MCF 10A (cell line): ENCODE measurements at regions of chr2 and their contacts with region 1.

Region 1: GRCh38 chr2:148020111-148021058 is at the start of gene ORC4:
- DNase-seq: peak; percentile 100
- H3K4me3 Mint-ChIP-seq: peak within 1 kb of the TSS; percentile 90
- H3K27ac Mint-ChIP-seq: peak within 1 kb of the TSS; percentile 74
- H3K4me1 Mint-ChIP-seq: peaks cover 38% of the 10 kb centered on the region
- H3K27me3 Mint-ChIP-seq: no peaks in the 10 kb centered on the region
- CTCF ChIP-seq: peak; percentile 34
- total RNA-seq, gene ORC4: 38.0 and 53.3 TPM in 2 replicates

Region 2: DNA sequence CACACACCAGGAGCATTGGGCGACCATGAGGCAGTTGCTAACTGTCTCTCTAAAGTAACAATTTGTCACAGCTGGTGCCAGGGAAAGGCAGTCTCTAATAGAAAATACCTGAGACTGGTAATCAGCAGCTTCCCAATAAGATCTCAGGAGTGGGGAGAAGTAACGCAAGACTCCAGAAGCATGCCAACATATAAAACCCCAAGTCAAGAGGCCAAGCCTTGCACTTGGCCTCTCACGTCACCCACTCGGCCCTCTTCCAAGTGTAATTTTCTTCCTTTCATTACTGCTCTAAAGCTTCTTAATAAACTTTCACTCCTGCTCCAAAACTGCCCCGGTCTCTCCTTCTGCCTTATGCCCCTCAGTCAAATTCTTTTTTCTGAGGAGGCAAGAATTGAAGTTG is 631.2 kb before region 1 on chr2:
- CTCF ChIA-PET with region 1: no interaction called
- POLR2A ChIA-PET with region 1: no interaction called
- intact Hi-C with region 1: no loop called
- DNase-seq: no peak
- H3K4me3 Mint-ChIP-seq: no peak overlapping the region
- H3K27ac Mint-ChIP-seq: no peak overlapping the region
- H3K4me1 Mint-ChIP-seq: no peaks in the 10 kb centered on the region
- H3K27me3 Mint-ChIP-seq: no peaks in the 10 kb centered on the region
- CTCF ChIP-seq: no peak

Region 3: GRCh38 chr2:148130581-148130980 is 110.2 kb after region 1 on chr2:
- CTCF ChIA-PET with region 1: no interaction called
- POLR2A ChIA-PET with region 1: interaction called, 5 read pairs
- intact Hi-C with region 1: loop called (anchors 5 kb)
- DNase-seq: peak; percentile 5
- H3K4me3 Mint-ChIP-seq: no peak overlapping the region
- H3K27ac Mint-ChIP-seq: no peak overlapping the region
- H3K4me1 Mint-ChIP-seq: peaks cover 10% of the 10 kb centered on the region
- H3K27me3 Mint-ChIP-seq: no peaks in the 10 kb centered on the region
- CTCF ChIP-seq: no peak

Region 4: DNA sequence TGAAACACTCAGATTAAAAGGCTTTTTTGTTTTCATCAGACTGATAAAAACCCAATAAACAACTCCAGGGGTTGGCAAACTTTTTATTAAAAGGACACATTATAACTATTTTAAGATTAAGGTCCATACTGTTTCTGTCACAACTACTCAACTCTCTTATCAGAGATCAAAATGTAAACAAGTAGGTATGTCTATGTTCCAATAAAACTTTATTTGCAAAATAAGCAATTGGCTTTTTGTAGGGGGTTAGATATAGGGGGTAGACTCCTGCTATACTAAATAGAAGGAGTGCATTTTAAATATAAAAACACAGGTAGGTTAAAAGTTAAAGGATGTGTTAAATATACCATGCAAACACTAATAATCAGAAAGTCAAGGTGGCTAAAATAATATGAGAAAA is 174.5 kb after region 1 on chr2:
- CTCF ChIA-PET with region 1: no interaction called
- POLR2A ChIA-PET with region 1: no interaction called
- intact Hi-C with region 1: no loop called
- DNase-seq: no peak
- H3K4me3 Mint-ChIP-seq: no peak overlapping the region
- H3K27ac Mint-ChIP-seq: no peak overlapping the region
- H3K4me1 Mint-ChIP-seq: no peaks in the 10 kb centered on the region
- H3K27me3 Mint-ChIP-seq: no peaks in the 10 kb centered on the region
- CTCF ChIP-seq: no peak

Region 5: GRCh38 chr2:148209603-148210002 is 189.2 kb after region 1 on chr2:
- CTCF ChIA-PET with region 1: no interaction called
- POLR2A ChIA-PET with region 1: no interaction called
- intact Hi-C with region 1: loop called (anchors 5 kb)
- DNase-seq: no peak
- H3K4me3 Mint-ChIP-seq: no peak overlapping the region
- H3K27ac Mint-ChIP-seq: no peak overlapping the region
- H3K4me1 Mint-ChIP-seq: no peaks in the 10 kb centered on the region
- H3K27me3 Mint-ChIP-seq: no peaks in the 10 kb centered on the region
- CTCF ChIP-seq: no peak